ENCODE measurements at regions of chr4 and their contacts with region 1.

Region 1: DNA sequence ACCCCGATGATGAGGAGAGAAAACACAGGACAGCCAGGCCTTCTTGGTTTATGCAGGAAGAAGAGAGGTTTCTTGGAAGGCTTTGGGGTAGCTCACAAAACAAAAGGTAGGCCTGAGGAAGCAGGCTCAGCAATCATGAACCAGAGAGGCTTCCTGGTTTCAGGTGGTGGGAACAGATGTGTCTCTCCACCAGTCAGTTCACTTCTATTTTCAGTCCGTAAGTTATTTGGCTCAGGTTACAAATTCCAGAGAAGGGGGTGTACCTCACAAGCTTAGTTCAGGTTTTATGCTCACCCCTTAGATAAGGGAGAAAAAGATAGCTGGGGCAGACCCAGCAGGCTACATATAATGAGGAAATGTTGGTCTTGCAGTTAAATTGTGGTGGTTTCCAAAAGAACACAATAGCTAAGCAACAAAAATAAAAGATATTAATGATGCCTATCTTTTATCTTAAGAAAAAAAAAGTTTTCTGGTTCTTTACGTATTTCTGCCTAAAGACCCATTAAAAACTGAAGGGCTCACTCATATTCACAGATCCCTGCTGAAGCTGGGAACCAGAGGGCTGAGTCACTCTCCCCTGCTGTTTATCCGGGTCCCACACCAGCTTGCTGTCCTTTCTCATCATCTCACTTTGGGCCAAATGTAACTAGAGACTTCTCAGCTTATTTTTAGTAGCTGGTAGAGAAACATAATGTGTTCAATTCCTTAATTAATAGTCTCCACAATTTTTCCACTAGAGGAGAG is 177.0 kb downstream of the CAMK2D start:
- DNase-seq: peak in 1 of 2 experiments; percentile 38
- H3K4me3 ChIP-seq: no peak overlapping the region
- H3K27ac ChIP-seq: 0 out of 2 replicates have a peak overlapping the region, but pooled peaks have one; percentile 12
- H3K4me1 ChIP-seq: no peaks in the 10 kb centered on the region
- H3K27me3 ChIP-seq: no peaks in the 10 kb centered on the region
- CTCF ChIP-seq: no peak

Region 2: GRCh38 chr4:113555868-113556267 is 28.7 kb before region 1 on chr4:
- CTCF ChIA-PET with region 1: no interaction called
- POLR2A ChIA-PET with region 1: no interaction called
- intact Hi-C with region 1: loop called (anchors 2 kb)
- DNase-seq: no peak
- H3K4me3 ChIP-seq: no peak overlapping the region
- H3K27ac ChIP-seq: no peak overlapping the region
- H3K4me1 ChIP-seq: peaks cover 20% of the 10 kb centered on the region
- H3K27me3 ChIP-seq: no peaks in the 10 kb centered on the region
- CTCF ChIP-seq: no peak

Measured in PC-9 (cell line).